ENCODE measurements at regions of chr15 and their contacts with region 1.

Region 1: DNA sequence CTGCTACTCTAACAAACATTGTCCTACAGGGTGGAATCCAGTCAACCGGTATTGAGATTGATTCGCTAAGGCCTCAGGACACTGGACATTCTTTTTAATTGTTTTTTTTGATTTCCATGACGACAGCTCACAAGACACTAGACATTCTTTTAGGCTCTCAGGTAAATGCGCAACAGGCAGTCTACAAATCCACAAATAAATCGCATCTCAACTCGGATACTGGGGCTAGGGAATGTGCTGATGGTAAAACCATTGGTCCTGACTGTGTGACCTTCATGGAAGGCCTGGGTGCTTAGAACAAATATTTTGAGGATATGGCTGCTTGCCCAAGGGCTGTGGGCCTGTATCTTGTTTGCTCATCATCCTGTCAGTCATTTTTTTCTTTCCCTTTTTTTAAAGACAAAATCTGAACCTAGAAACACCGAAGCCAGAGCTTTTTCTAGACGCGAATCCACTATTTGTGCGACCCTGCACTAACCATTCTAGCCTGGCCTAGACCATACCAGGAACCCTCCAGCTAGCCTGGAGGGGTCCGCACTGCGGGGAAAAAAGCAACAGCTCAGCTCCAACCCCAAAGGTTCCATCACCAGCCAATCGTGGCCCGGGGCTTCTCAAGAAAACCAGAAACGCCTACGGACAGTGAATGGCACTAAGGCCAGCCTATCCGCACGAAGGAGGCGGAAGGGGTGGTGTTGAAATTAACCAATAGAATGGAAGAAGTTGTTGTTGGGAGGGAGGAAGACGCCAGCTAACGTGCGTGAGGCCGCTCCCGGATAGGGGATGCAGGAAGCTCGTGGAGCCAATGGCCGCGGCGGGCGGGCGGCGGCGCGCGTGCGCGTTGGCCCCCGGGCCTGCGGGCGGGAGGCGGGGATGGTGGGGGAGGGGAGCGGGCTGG is 18.1 kb upstream of the CHD2 start:
- DNase-seq: peak; percentile 98 to 99
- H3K4me3 ChIP-seq: peak overlapping the region; percentile 33
- H3K4me3 Mint-ChIP-seq: peak overlapping the region; percentile 87
- H3K27ac Mint-ChIP-seq: peak overlapping the region; percentile 98
- H3K4me1 ChIP-seq: peaks cover 48% of the 10 kb centered on the region
- H3K4me1 Mint-ChIP-seq: peaks cover 37% of the 10 kb centered on the region
- H3K27me3 ChIP-seq: no peaks in the 10 kb centered on the region
- H3K27me3 Mint-ChIP-seq: no peaks in the 10 kb centered on the region
- CTCF ChIP-seq: no peak

Region 2: GRCh38 chr15:92808978-92809879 is 72.8 kb before region 1 on chr15:
- CTCF ChIA-PET with region 1: interaction called, 18 read pairs
- POLR2A ChIA-PET with region 1: interaction called, 103 read pairs
- intact Hi-C with region 1: loop called (anchors 1 kb)
- DNase-seq: peak; percentile 98 to 99
- H3K4me3 ChIP-seq: peak overlapping the region; percentile 46
- H3K4me3 Mint-ChIP-seq: peak overlapping the region; percentile 97
- H3K27ac Mint-ChIP-seq: peak overlapping the region; percentile 96
- H3K4me1 ChIP-seq: peaks cover 27% of the 10 kb centered on the region
- H3K4me1 Mint-ChIP-seq: peaks cover 9% of the 10 kb centered on the region
- H3K27me3 ChIP-seq: no peaks in the 10 kb centered on the region
- H3K27me3 Mint-ChIP-seq: no peaks in the 10 kb centered on the region
- CTCF ChIP-seq: peak; percentile 32 to 93

Region 3: DNA sequence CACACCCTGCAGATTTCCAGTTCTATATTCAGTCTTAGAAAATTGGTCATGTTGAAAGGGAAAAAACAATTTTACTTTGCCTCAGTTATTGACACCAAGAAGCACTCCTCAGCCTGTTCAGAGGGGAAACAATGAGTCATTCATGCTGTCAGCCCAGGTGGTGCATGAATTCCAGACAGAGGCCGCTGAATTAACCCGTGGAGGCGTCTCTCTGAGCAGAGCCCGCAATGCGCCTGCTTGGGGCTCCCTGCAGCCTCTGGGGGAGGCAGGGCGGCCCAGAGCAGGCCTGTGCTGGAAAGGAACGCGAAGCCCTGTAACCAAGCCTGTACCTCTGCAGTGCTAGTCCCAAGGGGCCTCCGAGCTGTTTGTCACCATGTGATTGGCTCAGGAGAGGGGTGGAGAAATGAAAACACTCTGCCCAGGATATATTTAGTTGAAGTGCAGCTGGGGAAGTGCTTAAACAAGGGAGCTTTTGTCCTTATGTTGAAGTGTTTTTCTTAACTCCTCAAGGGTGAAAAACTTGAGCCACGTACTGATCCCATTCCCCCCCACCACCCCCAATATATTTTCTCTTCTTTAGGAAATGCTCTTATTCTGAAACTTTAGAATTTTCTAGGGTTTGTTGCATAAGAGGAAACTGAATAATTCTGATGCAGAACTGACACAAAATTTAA is 50.3 kb before region 1 on chr15:
- CTCF ChIA-PET with region 1: interaction called, 9 read pairs
- POLR2A ChIA-PET with region 1: interaction called, 35 read pairs
- intact Hi-C with region 1: loop called (anchors 1 kb)
- DNase-seq: peak; percentile 94 to 96
- H3K4me3 ChIP-seq: peak overlapping the region; percentile 13; the same call in 1 of the 2 replicates
- H3K4me3 Mint-ChIP-seq: peak overlapping the region; percentile 54
- H3K27ac Mint-ChIP-seq: peak overlapping the region; percentile 66
- H3K4me1 ChIP-seq: peaks cover 22% of the 10 kb centered on the region
- H3K4me1 Mint-ChIP-seq: peaks cover 13% of the 10 kb centered on the region
- H3K27me3 ChIP-seq: no peaks in the 10 kb centered on the region
- H3K27me3 Mint-ChIP-seq: no peaks in the 10 kb centered on the region
- CTCF ChIP-seq: no peak

Region 4: GRCh38 chr15:92903941-92904831 is 22.1 kb after region 1 on chr15:
- CTCF ChIA-PET with region 1: interaction called, 7 read pairs
- POLR2A ChIA-PET with region 1: interaction called, 55 read pairs
- intact Hi-C with region 1: loop called (anchors 1 kb)
- DNase-seq: peak; percentile 98 to 99
- H3K4me3 ChIP-seq: peak overlapping the region; percentile 51
- H3K4me3 Mint-ChIP-seq: peak overlapping the region; percentile 86
- H3K27ac Mint-ChIP-seq: peak overlapping the region; percentile 99
- H3K4me1 ChIP-seq: peaks cover 42% of the 10 kb centered on the region
- H3K4me1 Mint-ChIP-seq: peaks cover 45% of the 10 kb centered on the region
- H3K27me3 ChIP-seq: no peaks in the 10 kb centered on the region
- H3K27me3 Mint-ChIP-seq: no peaks in the 10 kb centered on the region
- CTCF ChIP-seq: no peak

Measured in Caco-2 (cell line).